Heart right ventricle (tissue), 16 donors: ENCODE measurements at regions of chr2 and their contacts with region 1.

Region 1: DNA sequence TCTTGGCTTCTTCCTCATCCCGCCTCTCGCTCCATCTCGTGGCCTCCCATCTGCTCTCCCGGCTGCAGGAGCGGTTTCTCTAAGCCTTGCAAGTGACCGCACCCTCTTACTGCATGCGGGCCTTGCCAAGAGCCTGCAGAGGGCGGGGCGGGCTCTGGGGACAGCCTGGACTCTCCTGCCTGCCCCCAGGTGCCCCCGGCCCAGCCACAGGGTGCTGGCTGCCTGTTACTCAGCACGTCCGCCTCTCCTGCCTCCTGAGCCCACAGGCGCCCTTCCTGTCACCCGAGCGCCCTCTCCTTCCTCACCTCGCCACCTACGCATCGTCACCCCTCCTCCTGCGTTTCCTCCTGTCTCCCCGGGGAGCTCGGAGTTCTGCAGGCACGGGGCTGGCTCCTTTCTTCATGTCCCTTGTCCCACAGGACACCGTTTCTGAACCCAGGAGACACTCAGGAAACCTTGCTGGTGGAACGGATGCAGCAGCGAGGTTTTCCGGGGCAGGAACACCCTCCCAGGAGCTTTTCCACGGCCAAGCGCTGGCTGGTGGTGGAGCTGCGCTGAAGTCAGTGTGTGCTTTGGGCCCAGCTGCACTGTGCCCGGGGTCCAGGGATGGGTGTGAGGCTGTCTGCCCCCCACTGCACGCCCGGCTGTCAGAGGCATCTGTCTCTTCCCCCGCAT is 28.5 kb downstream of the HPCAL1 start:
- DNase-seq: peak; percentile 57 to 77
- ATAC-seq: peak; percentile 45 to 88 (median 69)
- H3K4me3 ChIP-seq: peak overlapping the region in 7 of 10 donors; percentile 13 to 46 (median 32)
- H3K27ac ChIP-seq: peak overlapping the region in 8 of 10 donors; percentile 47 to 84 (median 65)
- H3K4me1 ChIP-seq: peaks cover 0 to 70% (median 66%) of the 10 kb centered on the region in 9 donors
- H3K27me3 ChIP-seq: no peaks in the 10 kb centered on the region
- CTCF ChIP-seq: peak in 4 of 9 donors; percentile 10 to 12 (median 11)

Region 2: DNA sequence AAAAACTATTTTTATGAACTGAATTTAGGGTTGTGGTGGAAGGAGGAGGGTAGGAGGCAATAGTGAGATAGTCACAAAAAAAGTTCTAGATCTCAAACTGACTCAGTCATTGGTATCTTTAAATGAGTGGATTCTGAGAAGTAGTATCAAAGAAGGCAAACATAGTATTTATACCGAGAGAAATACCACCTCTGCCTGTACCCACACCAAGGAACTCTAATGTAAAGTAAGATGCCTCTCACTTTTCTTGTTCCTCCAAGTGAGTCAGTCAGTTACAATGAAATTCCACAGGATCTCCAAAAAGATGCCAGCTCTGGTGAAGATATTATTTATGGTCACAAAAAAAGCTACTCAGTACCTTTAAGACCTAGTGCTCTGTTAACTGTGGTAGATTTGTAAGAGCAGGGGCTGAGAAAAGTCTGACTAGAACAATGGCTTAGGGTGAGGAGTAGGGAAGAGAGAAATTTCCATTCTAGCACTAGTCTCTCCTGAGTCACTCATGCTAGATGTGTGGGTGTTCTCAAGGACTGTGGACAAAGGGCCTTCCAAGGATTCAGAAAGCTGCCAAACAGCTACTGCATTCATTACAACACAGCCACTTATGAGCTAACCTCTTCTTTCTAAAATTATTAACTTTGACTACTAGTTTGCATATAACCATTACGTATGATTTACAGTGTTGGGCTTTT is 736.7 kb before region 1 on chr2:
- intact Hi-C with region 1: no loop called
- DNase-seq: peak in 1 of 2 donors; percentile 33
- ATAC-seq: peak; percentile 67 to 96 (median 87)
- H3K4me3 ChIP-seq: no peak overlapping the region
- H3K27ac ChIP-seq: peak overlapping the region in 5 of 10 donors; percentile 31 to 64 (median 38)
- H3K4me1 ChIP-seq: peaks cover 8 to 53% (median 44%) of the 10 kb centered on the region in 9 donors
- H3K27me3 ChIP-seq: no peaks in the 10 kb centered on the region
- CTCF ChIP-seq: no peak

Region 3: GRCh38 chr2:10239561-10239967 is 91.6 kb before region 1 on chr2:
- intact Hi-C with region 1: loop called in 1 of 10 experiments (anchors 5 kb)
- DNase-seq: no peak
- ATAC-seq: peak in 1 of 8 donors; percentile 20
- H3K4me3 ChIP-seq: no peak overlapping the region
- H3K27ac ChIP-seq: no peak overlapping the region
- H3K4me1 ChIP-seq: peaks cover 0 to 49% (median 22%) of the 10 kb centered on the region in 9 donors
- H3K27me3 ChIP-seq: peaks cover 0 to 3% (median 0%) of the 10 kb centered on the region in 7 donors
- CTCF ChIP-seq: peak in 2 of 9 donors; percentile 16 to 34

Region 4: DNA sequence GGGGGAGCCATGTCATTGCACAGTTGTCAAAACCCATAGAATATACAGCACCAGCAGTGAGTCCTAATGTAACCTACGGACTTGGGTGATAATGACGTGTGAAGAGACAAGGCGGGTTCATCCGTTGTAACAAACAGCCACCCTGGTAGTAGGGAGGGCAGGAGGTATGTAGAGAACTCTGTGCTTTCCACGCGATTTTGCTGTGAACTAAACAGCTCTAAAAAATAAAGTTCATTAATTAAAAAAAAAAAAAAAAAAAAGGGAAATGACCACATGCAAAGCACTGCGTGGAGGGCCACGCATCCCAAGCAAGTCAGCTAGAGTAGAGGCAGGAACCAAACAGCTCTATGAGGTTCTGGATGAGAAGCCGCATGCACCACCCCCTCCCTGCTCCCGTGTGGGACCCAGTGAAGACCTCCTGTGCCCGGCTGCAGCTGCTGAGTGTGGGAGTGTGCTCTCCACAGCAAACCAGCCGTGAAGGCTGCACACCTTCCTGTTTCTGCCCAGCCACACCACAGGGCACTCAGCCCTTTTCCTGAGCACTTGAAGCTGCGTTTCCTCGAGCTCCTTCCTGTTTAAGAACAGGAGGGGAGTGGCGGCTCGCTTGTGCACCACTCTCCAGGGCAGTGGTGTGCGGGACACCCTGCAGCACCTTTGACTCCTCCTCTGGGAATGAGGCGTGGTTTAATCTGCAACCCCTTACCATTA is 51.3 kb after region 1 on chr2:
- intact Hi-C with region 1: loop called in 1 of 10 experiments (anchors 5 kb)
- DNase-seq: no peak
- ATAC-seq: peak in 7 of 8 donors; percentile 42 to 65 (median 51)
- H3K4me3 ChIP-seq: peak overlapping the region in 4 of 10 donors; percentile 8 to 14 (median 12)
- H3K27ac ChIP-seq: peak overlapping the region in 3 of 10 donors; percentile 8 to 56 (median 40)
- H3K4me1 ChIP-seq: peaks cover 16 to 70% (median 50%) of the 10 kb centered on the region in 9 donors
- H3K27me3 ChIP-seq: no peaks in the 10 kb centered on the region
- CTCF ChIP-seq: no peak

Region 5: DNA sequence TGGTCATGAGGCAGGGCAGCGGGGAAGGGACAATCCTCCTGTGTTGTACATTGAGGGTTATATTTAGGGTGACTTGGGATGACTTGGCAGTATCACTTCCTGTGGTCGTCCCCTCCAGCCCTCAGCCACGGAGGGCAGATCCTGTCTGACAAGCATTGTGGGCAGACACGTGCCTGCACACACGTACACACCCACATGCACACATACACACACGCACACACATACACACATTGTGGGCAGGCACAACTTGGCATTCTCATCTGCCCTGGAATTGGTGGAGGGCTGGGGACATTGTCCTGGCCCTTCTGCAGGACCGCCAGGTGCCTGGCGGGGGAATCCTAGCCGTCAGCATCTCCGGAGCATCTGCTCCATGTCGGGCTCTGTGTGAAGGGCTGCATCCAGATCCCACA is 69.4 kb after region 1 on chr2:
- intact Hi-C with region 1: loop called in 2 of 10 experiments (anchors 5 kb)
- DNase-seq: peak in 1 of 2 donors; percentile 50
- ATAC-seq: peak in 6 of 8 donors; percentile 1 to 36 (median 30)
- H3K4me3 ChIP-seq: no peak overlapping the region
- H3K27ac ChIP-seq: peak overlapping the region in 9 of 10 donors; percentile 42 to 85 (median 74)
- H3K4me1 ChIP-seq: peaks cover 19 to 81% (median 64%) of the 10 kb centered on the region in 9 donors
- H3K27me3 ChIP-seq: no peaks in the 10 kb centered on the region
- CTCF ChIP-seq: no peak

Region 6: DNA sequence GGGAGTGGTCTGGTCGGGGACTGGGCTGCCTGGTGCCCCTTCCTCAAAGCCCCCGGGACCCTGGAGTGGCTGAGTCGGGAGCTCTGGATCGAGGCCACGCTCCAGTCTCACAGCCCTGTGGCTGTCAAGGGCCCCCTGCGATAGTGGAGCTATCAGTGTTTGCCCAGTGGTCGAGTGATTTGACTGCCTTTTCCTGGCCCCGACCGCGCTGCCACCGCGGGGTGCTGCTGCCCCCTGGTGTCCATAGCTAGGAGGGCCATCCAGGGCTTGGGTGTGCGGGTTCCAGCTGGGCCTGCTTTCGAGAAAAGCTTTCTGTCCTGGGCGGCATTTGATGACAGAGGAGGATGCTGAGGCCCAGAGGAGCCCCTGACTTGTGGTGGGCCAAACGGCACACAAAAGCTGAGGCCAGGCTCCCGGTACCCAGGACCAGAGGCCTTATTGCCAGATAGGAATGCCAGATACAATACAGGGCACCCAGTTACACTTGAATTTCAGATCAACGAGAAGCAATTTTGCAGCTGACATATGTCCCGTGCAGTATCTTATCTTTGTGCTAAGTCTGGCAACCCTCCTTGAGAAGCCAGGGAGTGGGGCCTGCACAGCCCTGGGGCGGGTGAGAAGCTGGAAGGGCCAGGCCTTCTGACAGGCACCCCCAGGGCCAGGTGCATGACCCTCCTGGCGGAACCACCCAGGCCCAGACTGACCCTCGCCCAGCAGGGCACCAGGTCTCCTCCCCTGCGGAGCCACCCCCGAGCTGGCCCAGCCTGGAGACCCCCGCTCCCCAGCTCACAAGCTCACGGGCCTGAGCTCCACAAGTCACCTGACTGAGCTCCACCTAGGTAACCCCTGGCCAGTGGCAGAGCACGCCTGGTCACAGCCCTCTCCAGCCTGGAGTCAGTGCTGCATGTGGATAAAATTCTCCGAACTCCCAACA is 104.0 kb after region 1 on chr2:
- intact Hi-C with region 1: no loop called
- DNase-seq: peak; percentile 62 to 78
- ATAC-seq: peak; percentile 74 to 93 (median 86)
- H3K4me3 ChIP-seq: no peak overlapping the region
- H3K27ac ChIP-seq: no peak overlapping the region
- H3K4me1 ChIP-seq: peaks cover 0 to 26% (median 10%) of the 10 kb centered on the region in 9 donors
- H3K27me3 ChIP-seq: peaks cover 0 to 8% (median 0%) of the 10 kb centered on the region in 7 donors
- CTCF ChIP-seq: peak; percentile 92 to 99 (median 97)

Region 7: GRCh38 chr2:10863837-10864236 is 532.7 kb after region 1 on chr2:
- intact Hi-C with region 1: no loop called
- DNase-seq: no peak
- ATAC-seq: no peak
- H3K4me3 ChIP-seq: no peak overlapping the region
- H3K27ac ChIP-seq: peak overlapping the region in 9 of 10 donors; percentile 18 to 90 (median 74)
- H3K4me1 ChIP-seq: peaks cover 15 to 84% (median 44%) of the 10 kb centered on the region in 9 donors
- H3K27me3 ChIP-seq: peaks cover 0 to 22% (median 4%) of the 10 kb centered on the region in 7 donors
- CTCF ChIP-seq: no peak